ENCODE measurements at regions of chr21 and their contacts with region 1.

Region 1: DNA sequence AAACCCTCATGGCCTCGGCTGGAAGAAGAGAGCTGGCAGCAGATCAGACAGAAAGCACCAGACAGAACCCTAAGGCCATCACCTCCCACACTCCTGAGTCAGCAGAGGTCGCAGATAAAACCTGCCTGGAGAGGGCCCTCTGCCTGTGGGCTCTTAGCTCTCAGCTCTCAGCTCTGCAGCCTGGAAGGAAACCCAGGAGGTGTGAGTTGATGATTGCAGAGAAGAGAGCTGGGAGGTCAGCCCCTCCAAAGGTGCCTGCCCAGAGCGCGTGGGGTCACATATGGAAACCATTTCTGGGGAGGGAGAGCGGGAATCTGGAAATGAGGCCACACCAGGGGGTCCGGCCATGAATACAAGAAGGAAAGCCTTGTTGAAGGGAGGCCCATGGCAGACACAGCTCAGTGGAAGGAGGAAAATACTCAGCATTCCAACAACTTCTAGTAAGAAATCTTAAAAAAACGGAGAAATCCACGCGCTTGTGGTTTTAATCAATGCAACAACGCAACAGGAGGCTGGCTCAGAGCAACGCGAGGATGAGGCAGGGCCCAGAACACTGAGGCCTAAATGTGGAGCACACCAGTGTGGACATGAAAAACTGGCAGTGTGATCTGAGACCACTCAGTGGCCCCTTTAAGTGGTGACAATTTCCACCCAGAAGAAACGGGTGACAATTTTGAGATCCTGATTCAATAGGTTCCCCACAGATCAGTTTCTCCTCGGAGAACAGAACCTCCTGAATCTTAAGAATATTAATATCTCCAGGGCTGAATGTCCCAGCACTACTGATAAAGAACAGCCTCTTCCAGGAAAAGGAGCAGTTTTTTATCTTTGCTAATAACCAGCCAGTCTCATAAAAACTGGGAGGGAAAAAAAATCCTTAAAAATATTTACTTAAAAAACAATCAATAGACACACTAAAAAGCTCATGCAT is 45.7 kb downstream of the PSMG1 start:
- DNase-seq: no peak
- H3K4me3 ChIP-seq: no peak overlapping the region
- H3K27ac ChIP-seq: peak overlapping the region in 1 of 2 donors; percentile 40
- H3K4me1 ChIP-seq: peaks cover 6% of the 10 kb centered on the region
- H3K27me3 ChIP-seq: no peaks in the 10 kb centered on the region
- CTCF ChIP-seq: no peak
- POLR2A ChIP-seq: no peak

Region 2: DNA sequence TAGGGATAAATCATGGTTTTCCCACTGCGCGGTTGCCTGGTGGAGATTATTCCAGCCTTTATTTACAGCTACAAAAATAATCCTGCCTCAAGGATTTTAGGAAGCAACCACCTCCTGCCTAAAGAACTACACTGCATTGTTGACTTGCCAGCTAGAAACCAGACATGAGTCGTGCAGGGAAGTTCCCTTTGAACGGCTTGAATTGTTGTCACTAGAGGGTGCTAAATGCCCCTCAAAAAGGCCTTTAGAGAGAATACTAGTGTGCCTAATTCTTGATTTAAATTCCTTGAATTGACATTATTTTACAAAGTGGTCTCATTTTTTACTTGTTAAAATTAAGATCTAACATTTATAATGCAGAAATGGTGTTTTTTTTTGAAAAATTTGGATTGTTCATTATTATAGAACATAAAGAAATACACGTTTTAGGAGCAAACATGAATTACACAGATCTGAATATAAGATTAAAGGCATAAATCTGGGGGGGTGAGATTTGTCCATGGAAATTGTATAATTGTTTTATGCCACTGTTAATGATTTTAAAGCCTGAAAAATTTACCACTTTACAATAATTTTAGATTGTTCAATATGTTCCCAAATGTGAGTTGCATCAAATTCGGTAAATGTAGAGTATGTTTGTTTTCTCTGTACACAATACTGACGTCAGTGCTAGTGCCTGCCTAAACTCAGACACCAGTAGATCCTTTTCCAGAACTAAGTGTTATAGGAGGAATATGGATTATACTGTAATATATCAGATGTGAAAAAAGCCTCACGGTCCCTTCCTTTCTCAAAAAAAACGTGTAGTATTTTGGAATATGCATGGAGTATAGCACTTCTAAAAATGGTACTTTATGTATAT is 631.6 kb before region 1 on chr21:
- intact Hi-C with region 1: loop called (anchors 5 kb)
- DNase-seq: peak; percentile 57
- H3K4me3 ChIP-seq: no peak overlapping the region
- H3K27ac ChIP-seq: no peak overlapping the region
- H3K4me1 ChIP-seq: no peaks in the 10 kb centered on the region
- H3K27me3 ChIP-seq: no peaks in the 10 kb centered on the region
- CTCF ChIP-seq: peak in 3 of 4 experiments; percentile 42 to 63 (median 59)
- POLR2A ChIP-seq: no peak

Region 3: DNA sequence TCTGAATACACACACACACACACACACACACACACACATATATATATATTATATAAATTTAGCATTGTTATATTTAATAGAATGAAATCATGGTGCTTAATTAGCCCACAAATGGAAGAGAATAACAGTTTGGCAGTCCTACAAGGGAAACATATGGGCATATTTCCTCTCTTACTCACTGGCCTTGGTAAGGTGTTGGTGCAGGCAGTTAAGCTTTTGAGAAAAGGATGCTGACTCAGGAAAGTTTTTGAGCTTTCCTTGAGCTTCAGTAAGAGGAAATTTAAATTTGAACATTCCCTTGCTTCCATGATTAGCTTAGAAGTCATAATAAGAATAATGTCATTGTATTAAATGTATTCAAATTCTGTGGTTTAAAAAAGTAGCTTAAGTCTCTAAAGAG is 438.3 kb after region 1 on chr21:
- intact Hi-C with region 1: no loop called
- DNase-seq: no peak
- H3K4me3 ChIP-seq: no peak overlapping the region
- H3K27ac ChIP-seq: no peak overlapping the region
- H3K4me1 ChIP-seq: no peaks in the 10 kb centered on the region
- H3K27me3 ChIP-seq: no peaks in the 10 kb centered on the region
- CTCF ChIP-seq: no peak
- POLR2A ChIP-seq: no peak